ENCODE measurements at regions of chr1 and their contacts with region 1.

Region 1: DNA sequence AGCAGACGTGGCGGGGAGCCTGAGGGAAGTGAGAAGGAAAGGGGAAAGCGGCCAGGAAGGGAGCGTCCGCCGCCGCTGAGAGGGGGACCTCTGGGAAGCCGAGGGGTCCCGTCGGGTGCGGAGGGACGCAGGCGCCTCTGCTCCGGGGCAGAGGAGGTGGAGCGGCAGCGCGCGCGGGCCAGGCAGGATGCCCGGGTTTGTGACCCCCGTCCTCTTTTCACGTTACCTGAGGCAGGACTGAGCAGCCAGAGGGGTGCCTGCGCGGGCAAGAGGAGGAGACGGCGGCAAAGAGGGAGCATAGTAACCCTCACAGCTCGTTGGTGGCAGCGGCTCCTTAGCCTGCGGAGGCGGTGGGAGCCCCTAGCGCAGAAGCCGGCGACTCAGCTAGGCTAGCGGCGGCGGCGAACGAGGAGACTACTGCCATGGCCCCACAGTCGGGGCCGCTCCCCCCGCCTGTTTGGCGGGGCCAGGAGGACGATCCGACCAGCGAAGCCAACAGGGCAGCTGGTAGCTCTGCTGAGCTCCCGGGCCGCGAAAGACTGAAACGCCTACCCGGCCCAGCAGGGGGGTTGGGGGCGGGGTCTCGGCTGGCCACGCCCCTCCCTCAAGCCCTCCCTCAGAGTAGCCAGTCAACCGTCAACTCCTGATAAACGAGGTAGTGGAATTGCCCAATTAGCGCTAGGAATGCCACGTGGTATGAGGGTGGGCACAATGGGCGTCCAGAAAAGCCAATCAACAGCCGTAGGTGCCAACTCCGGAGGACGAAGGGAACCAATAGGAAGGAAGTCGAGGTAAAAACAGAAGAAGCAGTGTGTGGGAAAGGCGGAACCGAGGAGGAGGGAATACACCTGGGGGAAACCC is at the start of gene TESK2:
- DNase-seq: peak; percentile 97 to 99 (median 98)
- ATAC-seq: peak; percentile 92 to 97 (median 93)
- H3K4me3 ChIP-seq: peak within 1 kb of the TSS; percentile 75 to 97 (median 87)
- H3K27ac ChIP-seq: peak within 1 kb of the TSS; percentile 74 to 87 (median 78)
- H3K4me1 ChIP-seq: peaks cover 0 to 3% (median 0%) of the 10 kb centered on the region in 3 donors
- H3K27me3 ChIP-seq: no peaks in the 10 kb centered on the region
- CTCF ChIP-seq: no peak
- total RNA-seq, gene TESK2: 1.9 to 3.6 (median 2.6) TPM

Region 2: GRCh38 chr1:45018599-45019230 is 472.1 kb before region 1 on chr1:
- intact Hi-C with region 1: loop called in 1 of 3 experiments (anchors 5 kb)
- DNase-seq: peak; percentile 60 to 90 (median 81)
- ATAC-seq: peak; percentile 87 to 97 (median 96)
- H3K4me3 ChIP-seq: no peak overlapping the region
- H3K27ac ChIP-seq: no peak overlapping the region
- H3K4me1 ChIP-seq: no peaks in the 10 kb centered on the region
- H3K27me3 ChIP-seq: no peaks in the 10 kb centered on the region
- CTCF ChIP-seq: peak; percentile 42 to 84 (median 81)

Region 3: GRCh38 chr1:45359882-45360513 is 130.9 kb before region 1 on chr1:
- intact Hi-C with region 1: loop called (anchors 5 to 10 kb)
- DNase-seq: peak in 3 of 6 donors; percentile 46 to 66 (median 49)
- ATAC-seq: peak; percentile 85 to 94 (median 92)
- H3K4me3 ChIP-seq: no peak overlapping the region
- H3K27ac ChIP-seq: no peak overlapping the region
- H3K4me1 ChIP-seq: no peaks in the 10 kb centered on the region
- H3K27me3 ChIP-seq: no peaks in the 10 kb centered on the region
- CTCF ChIP-seq: peak in 2 of 4 donors; percentile 43 to 51

Measured in pancreas (tissue), 10 donors.